ENCODE measurements at regions of chr4 and their contacts with region 1.

Region 1: GRCh38 chr4:102868781-102869568 is at the start of gene CISD2:
- DNase-seq: peak; percentile 91
- CTCF ChIP-seq: no peak

Region 2: GRCh38 chr4:102849579-102850104 is 19.3 kb before region 1 on chr4:
- CTCF ChIA-PET with region 1: interaction called, 12 read pairs
- POLR2A ChIA-PET with region 1: no interaction called
- DNase-seq: no peak
- CTCF ChIP-seq: no peak

Region 3: DNA sequence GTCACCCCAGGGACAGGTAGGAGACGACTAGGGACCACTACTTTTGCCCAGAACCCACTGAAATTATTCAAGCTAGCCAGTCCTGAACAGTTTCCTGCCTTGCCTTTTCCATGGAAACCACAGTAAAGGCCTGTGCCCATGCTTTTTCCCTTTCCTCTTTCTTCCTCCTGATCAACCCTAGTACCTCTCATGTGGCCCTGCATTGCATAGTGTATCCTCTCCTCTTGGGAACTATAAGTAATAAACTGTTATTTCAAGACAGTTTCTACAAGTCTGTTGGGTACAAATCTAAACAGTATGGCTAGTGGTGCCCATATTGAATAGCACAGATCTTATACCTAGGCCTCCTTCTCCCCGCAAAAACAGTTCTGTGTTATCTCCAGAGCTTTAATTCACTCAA is 14.3 kb after region 1 on chr4:
- CTCF ChIA-PET with region 1: interaction called, 9 read pairs
- POLR2A ChIA-PET with region 1: interaction called, 13 read pairs
- DNase-seq: no peak
- CTCF ChIP-seq: no peak